ENCODE measurements at regions of chr1 and their contacts with region 1.

Region 1: GRCh38 chr1:225772323-225772768 is 5.3 kb upstream of the SRP9 start:
- DNase-seq: peak; percentile 86
- ATAC-seq: peak; percentile 59
- H3K4me3 ChIP-seq: peak overlapping the region in 1 of 3 experiments; percentile 24; a peak in 1 of 6 replicates
- H3K27ac ChIP-seq: peak overlapping the region; percentile 34
- H3K4me1 ChIP-seq: peaks cover 83% of the 10 kb centered on the region
- H3K27me3 ChIP-seq: no peaks in the 10 kb centered on the region; a peak in 1 of 5 replicates
- CTCF ChIP-seq: peak; percentile 95
- EP300 ChIP-seq: no peak
- POLR2A ChIP-seq: no peak
- RAD21 ChIP-seq: peak; percentile 94

Region 2: GRCh38 chr1:225480825-225481434 is 291.4 kb before region 1 on chr1:
- CTCF ChIA-PET with region 1: interaction called, 32 read pairs
- POLR2A ChIA-PET with region 1: interaction called, 8 read pairs
- in situ Hi-C with region 1: loop called (anchors 5 kb)
- intact Hi-C with region 1: loop called (anchors 1 kb)
- DNase-seq: peak; percentile 36
- ATAC-seq: peak; percentile 85
- H3K4me3 ChIP-seq: no peak overlapping the region
- H3K27ac ChIP-seq: no peak overlapping the region
- H3K4me1 ChIP-seq: peaks cover 23% of the 10 kb centered on the region
- H3K27me3 ChIP-seq: peaks cover 3 to 9% of the 10 kb centered on the region in 2 experiments; a peak in 2 of 5 replicates
- CTCF ChIP-seq: peak; percentile 85
- EP300 ChIP-seq: no peak
- POLR2A ChIP-seq: no peak
- RAD21 ChIP-seq: no peak

Region 3: DNA sequence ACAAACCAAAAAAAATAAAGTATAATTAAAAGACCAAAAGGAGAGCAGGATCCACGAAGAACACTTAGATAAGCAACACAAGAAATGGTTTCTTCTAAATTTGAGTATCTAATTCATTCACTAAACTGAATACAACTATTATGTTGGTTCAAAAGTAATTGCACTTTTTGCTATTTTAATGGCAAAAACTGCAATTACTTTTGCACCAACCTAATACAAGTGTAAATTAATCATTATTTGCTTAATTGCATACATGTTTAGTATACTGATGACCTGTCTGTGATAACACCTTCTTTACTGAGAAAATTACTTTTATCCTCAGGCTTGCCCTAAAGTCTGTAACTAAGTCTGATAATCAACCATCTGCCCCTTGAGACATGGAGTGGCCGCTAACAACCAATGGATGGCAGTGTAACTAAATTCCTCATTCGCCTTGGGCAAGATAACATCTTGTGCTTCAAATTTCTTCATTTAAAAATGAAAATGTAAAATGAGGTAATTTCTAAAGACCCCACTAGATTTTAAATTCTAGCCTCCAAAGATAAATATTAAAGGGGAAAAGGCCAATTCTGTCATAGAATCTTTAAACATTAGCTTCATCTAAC is 204.7 kb before region 1 on chr1:
- CTCF ChIA-PET with region 1: no interaction called
- POLR2A ChIA-PET with region 1: no interaction called
- in situ Hi-C with region 1: no loop called
- intact Hi-C with region 1: loop called (anchors 5 kb)
- DNase-seq: peak; percentile 6
- ATAC-seq: no peak
- H3K4me3 ChIP-seq: no peak overlapping the region
- H3K27ac ChIP-seq: no peak overlapping the region
- H3K4me1 ChIP-seq: no peaks in the 10 kb centered on the region
- H3K27me3 ChIP-seq: no peaks in the 10 kb centered on the region
- CTCF ChIP-seq: peak; percentile 20; the same call in 1 of the 2 replicates
- EP300 ChIP-seq: no peak
- POLR2A ChIP-seq: no peak
- RAD21 ChIP-seq: no peak

Region 4: GRCh38 chr1:225694151-225694603 is 78.2 kb before region 1 on chr1:
- CTCF ChIA-PET with region 1: no interaction called
- POLR2A ChIA-PET with region 1: interaction called, 49 read pairs
- in situ Hi-C with region 1: loop called (anchors 5 kb)
- intact Hi-C with region 1: loop called (anchors 5 kb)
- DNase-seq: peak; percentile 98
- ATAC-seq: peak; percentile 98
- H3K4me3 ChIP-seq: no peak overlapping the region
- H3K27ac ChIP-seq: peak overlapping the region; percentile 63
- H3K4me1 ChIP-seq: peaks cover 78% of the 10 kb centered on the region
- H3K27me3 ChIP-seq: no peaks in the 10 kb centered on the region
- CTCF ChIP-seq: no peak
- EP300 ChIP-seq: peak; percentile 46 to 89; a peak in 3 of 4 replicates
- POLR2A ChIP-seq: no peak
- RAD21 ChIP-seq: no peak

Region 5: DNA sequence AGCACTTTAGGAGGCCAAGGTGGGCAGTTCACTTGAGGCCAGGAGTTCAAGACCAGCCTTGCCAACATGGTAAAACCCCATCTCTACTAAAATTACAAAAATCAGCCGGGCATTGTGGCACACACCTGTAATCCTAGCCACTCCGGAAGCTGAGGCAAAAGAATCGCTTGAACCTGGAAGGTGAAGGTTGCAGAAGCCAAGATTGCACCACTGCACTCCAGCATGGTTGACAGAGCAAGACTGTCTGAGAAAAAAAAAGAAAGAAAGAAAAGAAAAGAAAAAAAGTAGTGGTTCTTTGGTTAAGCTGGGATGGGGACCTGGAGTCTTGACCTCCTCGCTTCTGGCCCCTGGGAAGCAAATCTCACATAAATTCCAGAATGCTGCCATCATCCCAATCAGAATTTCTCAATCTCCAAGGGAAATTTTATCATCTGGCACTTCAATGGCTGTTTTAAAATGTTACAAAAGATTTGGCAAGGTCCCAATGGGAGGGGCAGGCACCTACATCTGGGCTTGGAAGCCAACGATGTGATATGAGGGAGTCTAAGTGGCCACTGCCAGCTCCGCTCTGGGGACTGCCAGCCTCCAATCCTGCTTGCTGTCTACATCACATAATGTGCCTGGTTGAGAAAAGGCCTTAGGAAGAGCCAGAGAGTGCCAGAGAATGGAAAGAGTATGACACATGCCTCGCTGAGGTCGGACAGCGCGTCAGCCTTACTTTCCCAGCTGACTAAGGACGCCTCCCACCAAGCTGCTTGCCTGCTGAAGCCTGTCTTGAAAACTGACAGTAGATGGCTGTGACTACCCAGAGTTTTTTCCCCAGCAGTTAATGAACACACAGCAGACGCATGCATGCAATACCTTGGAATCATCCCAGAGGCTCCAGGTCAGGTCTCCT is 36.8 kb before region 1 on chr1:
- CTCF ChIA-PET with region 1: interaction called, 4 read pairs
- POLR2A ChIA-PET with region 1: interaction called, 36 read pairs
- in situ Hi-C with region 1: no loop called
- intact Hi-C with region 1: loop called (anchors 5 kb)
- DNase-seq: peak; percentile 72
- ATAC-seq: peak; percentile 87
- H3K4me3 ChIP-seq: peak overlapping the region; percentile 6 to 53 (median 35); a peak in 3 of 6 replicates
- H3K27ac ChIP-seq: no peak overlapping the region
- H3K4me1 ChIP-seq: peaks cover 67% of the 10 kb centered on the region
- H3K27me3 ChIP-seq: peaks cover 0 to 5% of the 10 kb centered on the region in 2 experiments; a peak in 1 of 5 replicates
- CTCF ChIP-seq: peak; percentile 43
- EP300 ChIP-seq: no peak
- POLR2A ChIP-seq: no peak
- RAD21 ChIP-seq: no peak

Region 6: DNA sequence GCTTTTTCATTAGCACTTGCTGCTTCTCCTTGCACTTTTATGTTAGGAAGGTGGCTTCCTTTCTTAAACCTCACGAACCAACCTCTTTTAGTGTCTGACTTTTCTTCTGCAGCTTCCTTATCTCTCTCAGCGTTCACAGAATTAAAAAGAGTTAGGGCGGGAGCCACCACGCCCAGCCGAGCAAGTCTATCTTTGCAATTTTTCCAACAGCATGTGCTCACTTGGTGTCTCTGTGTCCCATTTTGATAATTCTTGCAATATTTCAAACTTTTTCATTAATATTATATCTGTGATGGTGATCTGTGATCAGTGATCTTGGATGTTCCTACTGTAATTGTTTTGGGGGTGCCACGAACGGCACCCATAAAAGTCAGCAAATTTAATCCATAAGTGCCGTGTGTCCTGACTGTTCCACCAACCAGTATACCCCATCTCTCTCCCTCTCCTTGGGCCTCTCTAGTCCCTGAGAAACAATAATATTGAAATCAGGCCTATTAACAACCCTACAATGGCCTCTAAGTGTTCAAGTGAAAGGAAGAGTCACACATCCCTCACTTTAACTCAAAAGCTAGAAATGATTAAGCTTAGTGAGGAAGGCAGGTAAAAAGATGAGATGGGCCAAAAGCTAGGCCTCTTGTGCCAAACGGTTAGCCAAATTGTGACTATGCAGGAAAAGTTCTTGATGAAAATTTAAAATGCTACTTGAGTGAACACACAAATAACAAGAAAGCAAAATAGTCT is 982.6 kb after region 1 on chr1:
- CTCF ChIA-PET with region 1: no interaction called
- POLR2A ChIA-PET with region 1: no interaction called
- in situ Hi-C with region 1: no loop called
- intact Hi-C with region 1: no loop called
- DNase-seq: no peak
- ATAC-seq: no peak
- H3K4me3 ChIP-seq: no peak overlapping the region
- H3K27ac ChIP-seq: no peak overlapping the region
- H3K4me1 ChIP-seq: no peaks in the 10 kb centered on the region
- H3K27me3 ChIP-seq: peaks cover 0 to 41% of the 10 kb centered on the region in 2 experiments; a peak in 3 of 5 replicates
- CTCF ChIP-seq: no peak
- EP300 ChIP-seq: no peak
- POLR2A ChIP-seq: no peak
- RAD21 ChIP-seq: no peak

Measured in HepG2 (cell line).